CD14-positive monocyte (primary cell): ENCODE measurements at regions of chr22 and their contacts with region 1.

Region 1: DNA sequence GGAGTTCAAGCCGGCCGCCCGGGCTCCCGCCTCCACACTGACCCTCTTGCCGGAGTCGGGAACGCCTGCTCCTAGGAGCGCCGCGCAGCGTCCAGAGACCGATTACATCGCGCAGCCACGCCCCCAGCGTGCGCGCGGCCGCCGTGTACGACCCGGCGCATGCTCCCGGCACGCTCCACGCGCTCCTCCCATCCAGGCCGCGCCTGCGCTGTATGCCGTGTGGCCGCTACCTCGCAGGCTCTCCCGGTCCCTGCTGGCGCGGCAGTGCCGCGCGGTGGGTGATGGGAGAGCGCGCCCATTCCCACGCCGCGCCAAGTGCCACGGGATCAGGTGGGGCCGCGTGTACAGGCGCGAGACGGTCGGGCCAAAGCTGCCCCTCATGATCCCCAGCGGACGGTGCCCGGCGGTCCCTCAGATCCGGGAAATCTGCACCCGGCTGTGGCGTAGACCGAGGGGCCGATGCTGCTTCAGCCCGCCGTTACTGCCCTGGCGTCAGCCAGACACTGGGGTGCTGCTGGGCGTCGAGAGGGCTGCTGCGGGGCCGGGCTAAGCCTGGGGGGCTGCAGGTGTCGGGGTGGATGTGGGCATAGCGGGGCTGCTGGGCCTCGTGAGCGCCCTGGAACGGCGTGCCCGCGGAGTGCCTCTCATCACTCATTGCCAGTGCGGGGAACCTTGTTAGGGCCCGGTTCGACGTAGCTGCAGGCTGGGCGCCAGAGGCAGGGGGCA is at the starts of genes GNB1L and RTL10:
- DNase-seq: peak; percentile 94 to 97 (median 96)
- H3K4me3 ChIP-seq: peak within 1 kb of the TSS; percentile 55 to 97 (median 93)
- H3K4me3 Mint-ChIP-seq: peak within 1 kb of the TSS; percentile 86 to 93
- H3K27ac ChIP-seq: peak within 1 kb of the TSS; percentile 88 to 91
- H3K27ac Mint-ChIP-seq: peak within 1 kb of the TSS; percentile 84 to 94 (median 92)
- H3K4me1 ChIP-seq: peaks cover 29 to 31% of the 10 kb centered on the region in 2 donors
- H3K4me1 Mint-ChIP-seq: peaks cover 30% of the 10 kb centered on the region
- H3K27me3 ChIP-seq: no peaks in the 10 kb centered on the region
- H3K27me3 Mint-ChIP-seq: peaks cover 0 to 4% (median 1%) of the 10 kb centered on the region in 3 donors
- CTCF ChIP-seq: no peak
- polyA plus RNA-seq, gene GNB1L: 3.4 to 6.0 (median 4.8) TPM
- polyA plus RNA-seq, gene RTL10: 1.4 to 6.5 (median 1.5) TPM

Region 2: GRCh38 chr22:19886601-19887255 is 31.8 kb after region 1 on chr22:
- intact Hi-C with region 1: loop called (anchors 2 to 5 kb)
- DNase-seq: peak; percentile 87 to 98 (median 94)
- H3K4me3 ChIP-seq: peak overlapping the region in 1 of 3 experiments; percentile 13
- H3K4me3 Mint-ChIP-seq: peak overlapping the region in 1 of 2 donors; percentile 48
- H3K27ac ChIP-seq: peak overlapping the region; percentile 83 to 90
- H3K27ac Mint-ChIP-seq: peak overlapping the region; percentile 84 to 97 (median 94)
- H3K4me1 ChIP-seq: peaks cover 31 to 38% of the 10 kb centered on the region in 2 donors
- H3K4me1 Mint-ChIP-seq: peaks cover 33% of the 10 kb centered on the region
- H3K27me3 ChIP-seq: no peaks in the 10 kb centered on the region
- H3K27me3 Mint-ChIP-seq: peaks cover 0 to 2% (median 0%) of the 10 kb centered on the region in 3 donors
- CTCF ChIP-seq: no peak